ENCODE measurements at regions of chr15 and their contacts with region 1.

Region 1: DNA sequence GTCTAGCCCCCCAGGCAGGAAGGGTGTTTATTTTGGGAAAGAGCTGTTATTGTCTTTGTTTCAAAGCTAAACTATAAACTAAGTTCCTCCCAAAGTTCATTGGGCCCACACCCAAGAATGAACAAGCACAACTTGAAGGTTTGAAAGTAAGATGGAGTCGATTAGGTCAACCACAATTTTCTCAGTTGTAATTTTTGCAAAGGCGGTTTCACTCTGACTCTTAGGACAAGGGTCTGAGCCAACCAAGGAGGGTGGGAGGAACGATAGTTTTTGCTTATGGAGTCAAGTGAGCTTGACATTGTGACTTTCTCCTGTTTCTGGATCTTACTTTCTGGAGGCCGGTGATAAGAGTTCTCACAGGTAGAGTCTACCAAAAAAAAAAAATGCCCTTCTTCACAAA is 5.8 kb upstream of the ZNF770 start:
- DNase-seq: peak; percentile 64
- H3K4me3 Mint-ChIP-seq: peak overlapping the region; percentile 53
- H3K27ac Mint-ChIP-seq: peak overlapping the region; percentile 90
- H3K4me1 Mint-ChIP-seq: peaks cover 30% of the 10 kb centered on the region
- H3K27me3 Mint-ChIP-seq: peaks cover 8% of the 10 kb centered on the region

Region 2: DNA sequence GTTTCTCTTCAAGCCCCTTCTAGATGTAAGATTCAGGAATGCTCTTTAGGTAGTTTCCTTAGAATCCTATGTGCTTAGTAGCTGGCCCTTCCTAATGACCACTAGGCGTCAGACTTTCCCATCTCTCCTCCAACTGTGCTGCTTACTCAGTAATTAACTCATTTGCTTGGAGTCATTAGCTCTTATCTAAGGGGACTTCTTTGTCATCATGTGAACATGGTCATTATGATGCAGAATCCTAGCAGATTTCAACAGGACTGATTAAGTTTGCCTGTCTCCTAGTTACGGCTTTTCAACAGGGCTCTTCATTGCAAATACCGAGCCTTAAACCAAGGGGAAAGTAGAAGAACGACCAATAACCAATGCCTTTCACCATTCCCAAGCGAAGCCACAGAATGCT is 285.5 kb before region 1 on chr15:
- CTCF ChIA-PET with region 1: no interaction called
- POLR2A ChIA-PET with region 1: no interaction called
- intact Hi-C with region 1: no loop called
- DNase-seq: no peak
- H3K4me3 Mint-ChIP-seq: no peak overlapping the region
- H3K27ac Mint-ChIP-seq: no peak overlapping the region
- H3K4me1 Mint-ChIP-seq: no peaks in the 10 kb centered on the region
- H3K27me3 Mint-ChIP-seq: peaks cover 27% of the 10 kb centered on the region

Region 3: DNA sequence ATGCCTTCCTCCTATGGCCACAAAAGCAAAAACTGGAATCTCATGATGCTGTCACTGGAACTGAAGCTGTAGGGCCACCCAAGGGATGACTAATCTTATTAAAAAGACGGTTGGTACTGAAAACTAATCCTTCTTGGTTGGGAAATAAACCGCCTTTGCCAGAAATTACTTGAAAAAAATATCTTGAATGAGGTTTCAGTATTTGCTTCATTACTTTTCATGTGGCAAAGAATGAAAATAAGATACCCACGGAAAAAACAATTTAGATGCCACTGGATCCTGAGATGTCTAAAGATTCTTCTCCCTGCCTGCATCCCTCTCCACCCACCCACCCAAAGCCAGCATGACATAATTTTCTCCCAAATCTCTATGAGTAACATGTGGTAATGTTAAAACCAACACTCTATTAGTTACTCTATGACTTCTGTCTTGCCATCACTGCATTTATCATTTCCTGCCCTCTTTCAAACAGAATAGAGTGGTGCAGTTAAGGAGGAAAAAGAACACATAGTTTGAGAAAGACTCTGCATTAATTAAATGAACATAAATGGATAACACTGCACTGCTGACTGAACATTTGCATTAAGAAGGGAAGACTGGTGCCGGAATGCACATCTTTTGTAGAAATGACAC is 663.9 kb after region 1 on chr15:
- CTCF ChIA-PET with region 1: no interaction called
- POLR2A ChIA-PET with region 1: no interaction called
- intact Hi-C with region 1: loop called (anchors 5 kb)
- DNase-seq: peak; percentile 65
- H3K4me3 Mint-ChIP-seq: no peak overlapping the region
- H3K27ac Mint-ChIP-seq: peak overlapping the region; percentile 26
- H3K4me1 Mint-ChIP-seq: peaks cover 11% of the 10 kb centered on the region
- H3K27me3 Mint-ChIP-seq: peaks cover 19% of the 10 kb centered on the region

Measured in activated CD4-positive, alpha-beta memory T cell treated with anti-CD3 and anti-CD28 coated beads for 36 hours (primary cell).